ENCODE measurements at regions of chr6 and their contacts with region 1.

Region 1: GRCh38 chr6:162856885-162857284 is 129.1 kb downstream of the PACRG start:
- DNase-seq: peak; percentile 85 to 97
- H3K4me3 ChIP-seq: peak overlapping the region; percentile 18
- H3K4me1 ChIP-seq: peaks cover 24% of the 10 kb centered on the region
- H3K27me3 ChIP-seq: no peaks in the 10 kb centered on the region

Region 2: GRCh38 chr6:163413345-163414116 is 556.6 kb after region 1 on chr6:
- in situ Hi-C with region 1: loop called (anchors 10 kb)
- DNase-seq: peak; percentile 71 to 84
- H3K4me3 ChIP-seq: peak overlapping the region; percentile 49
- H3K4me1 ChIP-seq: peaks cover 8% of the 10 kb centered on the region
- H3K27me3 ChIP-seq: no peaks in the 10 kb centered on the region